ENCODE measurements at regions of chr5 and their contacts with region 1.

Region 1: DNA sequence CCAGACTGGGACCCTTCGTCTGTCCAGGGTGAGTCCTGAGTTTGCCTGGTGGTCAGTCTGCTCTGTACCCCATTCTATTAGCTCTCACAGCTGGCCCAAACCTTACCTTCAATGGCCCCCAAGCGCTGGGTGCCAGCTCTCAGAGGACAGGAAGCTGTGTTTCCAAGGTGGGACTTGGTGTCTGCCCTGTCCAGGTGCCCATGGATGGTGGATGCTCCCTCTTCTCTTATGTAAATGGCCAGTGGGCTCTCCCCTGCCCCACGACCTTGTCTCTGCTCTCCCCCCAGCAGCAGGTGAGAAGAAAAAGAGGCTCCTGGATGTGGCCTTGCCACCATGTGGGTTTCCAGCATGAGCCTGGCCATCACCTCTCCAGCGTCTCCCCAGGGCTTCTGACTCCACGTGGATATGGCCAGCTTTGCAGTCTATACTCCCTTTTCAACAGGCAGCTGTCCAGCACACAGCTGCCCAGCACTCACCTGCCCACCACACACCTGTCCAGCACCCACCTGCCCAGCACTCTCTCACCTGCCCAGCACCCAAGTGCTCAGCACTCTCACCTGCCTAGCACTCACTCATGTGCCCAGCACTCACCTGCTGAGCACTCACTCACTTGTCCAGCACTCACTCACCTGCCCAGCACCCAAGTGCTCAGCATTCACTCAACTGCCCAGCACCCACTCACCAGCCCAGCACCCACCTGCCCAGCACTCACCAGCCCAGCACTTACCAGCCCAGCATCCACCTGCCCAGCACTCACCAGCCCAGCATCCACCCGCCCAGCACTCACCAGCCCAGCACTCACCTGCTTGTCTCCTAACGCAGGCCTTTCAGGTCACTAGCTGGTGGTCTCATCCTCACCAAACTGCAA is 136.2 kb upstream of the IRX2 start:
- DNase-seq: no peak
- ATAC-seq: peak; percentile 17
- H3K4me3 ChIP-seq: no peak overlapping the region
- H3K27ac ChIP-seq: no peak overlapping the region
- H3K4me1 ChIP-seq: no peaks in the 10 kb centered on the region
- H3K27me3 ChIP-seq: no peaks in the 10 kb centered on the region

Region 2: GRCh38 chr5:2334719-2335118 is 553.0 kb before region 1 on chr5:
- intact Hi-C with region 1: loop called in 1 of 2 experiments (anchors 10 kb)
- DNase-seq: no peak
- ATAC-seq: no peak
- H3K4me3 ChIP-seq: no peak overlapping the region
- H3K27ac ChIP-seq: no peak overlapping the region
- H3K4me1 ChIP-seq: no peaks in the 10 kb centered on the region
- H3K27me3 ChIP-seq: no peaks in the 10 kb centered on the region

Region 3: DNA sequence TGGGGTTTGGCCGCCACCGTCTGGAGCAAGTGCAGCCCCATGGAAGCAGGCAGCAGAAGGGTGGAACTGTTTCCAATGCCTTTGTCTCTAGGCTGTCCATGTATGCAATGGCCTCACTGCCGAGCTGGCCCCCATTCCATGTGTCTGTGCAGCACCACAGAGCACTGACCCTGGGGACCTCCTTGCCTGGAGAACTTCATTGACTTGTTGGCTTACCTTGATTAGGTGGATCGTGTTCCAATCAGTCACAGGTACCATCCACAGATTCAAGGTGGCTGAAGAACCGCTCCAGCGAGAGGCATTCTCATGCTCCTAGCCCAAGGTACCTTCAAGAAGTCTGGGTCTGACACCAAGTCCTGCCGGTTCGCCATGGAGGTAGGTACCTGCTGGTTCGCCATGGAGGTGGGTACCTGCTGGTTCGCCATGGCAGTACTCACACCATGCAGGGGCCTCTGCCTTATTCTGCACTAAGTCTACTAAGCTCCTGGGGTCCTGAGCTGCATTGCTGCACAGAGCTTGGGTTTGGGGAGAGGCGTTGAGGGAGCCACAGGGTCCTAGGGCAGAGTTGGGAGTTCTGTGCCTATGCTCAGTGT is 349.7 kb after region 1 on chr5:
- intact Hi-C with region 1: no loop called
- DNase-seq: no peak
- ATAC-seq: no peak
- H3K4me3 ChIP-seq: no peak overlapping the region
- H3K27ac ChIP-seq: no peak overlapping the region
- H3K4me1 ChIP-seq: no peaks in the 10 kb centered on the region
- H3K27me3 ChIP-seq: no peaks in the 10 kb centered on the region

Measured in aorta (tissue), 5 donors.